ENCODE measurements at regions of chr19 and their contacts with region 1.

Region 1: DNA sequence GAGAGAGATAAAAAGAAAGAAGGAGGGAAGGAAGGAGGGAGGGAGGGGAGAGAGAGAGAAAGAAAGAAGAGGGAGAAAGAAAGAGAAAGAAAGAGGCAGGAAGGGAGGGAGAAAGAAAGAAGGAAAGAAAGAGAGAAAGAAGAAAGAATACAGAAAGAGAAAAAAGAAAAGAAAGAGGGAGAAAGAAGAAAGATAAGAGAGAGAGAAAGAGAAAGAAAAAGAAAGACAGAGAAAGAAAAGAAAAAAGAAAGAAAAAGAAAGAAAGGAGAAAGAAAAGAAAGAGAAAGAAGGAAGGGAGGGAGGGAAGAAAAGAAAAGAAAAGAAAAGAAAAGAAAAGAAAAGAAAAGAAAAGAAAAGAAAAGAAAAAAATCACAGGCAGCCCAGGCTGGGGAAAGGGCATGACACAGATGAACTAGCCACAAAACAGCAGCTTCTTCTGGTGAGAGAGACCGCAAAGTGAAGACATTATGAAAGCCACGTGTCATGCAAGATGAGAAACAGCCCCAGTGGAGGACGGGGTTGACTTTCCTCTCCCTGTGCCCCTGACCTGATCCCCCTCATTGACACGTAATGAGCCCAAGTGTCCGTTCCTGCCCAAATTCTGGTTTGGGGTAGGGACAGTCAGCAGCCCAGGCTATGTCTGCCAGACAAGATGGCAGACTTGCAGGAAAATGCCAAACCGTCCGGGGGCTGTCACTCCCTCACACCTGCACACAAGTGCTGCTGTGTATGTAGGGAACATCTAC is 102.1 kb downstream of the INSR start:
- DNase-seq: no peak
- ATAC-seq: no peak
- H3K4me3 ChIP-seq: no peak overlapping the region
- H3K27ac ChIP-seq: no peak overlapping the region
- H3K4me1 ChIP-seq: no peaks in the 10 kb centered on the region
- H3K27me3 ChIP-seq: no peaks in the 10 kb centered on the region
- CTCF ChIP-seq: no peak

Region 2: GRCh38 chr19:7159105-7159933 is 32.8 kb before region 1 on chr19:
- CTCF ChIA-PET with region 1: no interaction called
- POLR2A ChIA-PET with region 1: no interaction called
- in situ Hi-C with region 1: no loop called
- intact Hi-C with region 1: no loop called
- DNase-seq: peak; percentile 60
- ATAC-seq: no peak
- H3K4me3 ChIP-seq: no peak overlapping the region
- H3K27ac ChIP-seq: no peak overlapping the region
- H3K4me1 ChIP-seq: no peaks in the 10 kb centered on the region
- H3K27me3 ChIP-seq: no peaks in the 10 kb centered on the region
- CTCF ChIP-seq: no peak

Region 3: DNA sequence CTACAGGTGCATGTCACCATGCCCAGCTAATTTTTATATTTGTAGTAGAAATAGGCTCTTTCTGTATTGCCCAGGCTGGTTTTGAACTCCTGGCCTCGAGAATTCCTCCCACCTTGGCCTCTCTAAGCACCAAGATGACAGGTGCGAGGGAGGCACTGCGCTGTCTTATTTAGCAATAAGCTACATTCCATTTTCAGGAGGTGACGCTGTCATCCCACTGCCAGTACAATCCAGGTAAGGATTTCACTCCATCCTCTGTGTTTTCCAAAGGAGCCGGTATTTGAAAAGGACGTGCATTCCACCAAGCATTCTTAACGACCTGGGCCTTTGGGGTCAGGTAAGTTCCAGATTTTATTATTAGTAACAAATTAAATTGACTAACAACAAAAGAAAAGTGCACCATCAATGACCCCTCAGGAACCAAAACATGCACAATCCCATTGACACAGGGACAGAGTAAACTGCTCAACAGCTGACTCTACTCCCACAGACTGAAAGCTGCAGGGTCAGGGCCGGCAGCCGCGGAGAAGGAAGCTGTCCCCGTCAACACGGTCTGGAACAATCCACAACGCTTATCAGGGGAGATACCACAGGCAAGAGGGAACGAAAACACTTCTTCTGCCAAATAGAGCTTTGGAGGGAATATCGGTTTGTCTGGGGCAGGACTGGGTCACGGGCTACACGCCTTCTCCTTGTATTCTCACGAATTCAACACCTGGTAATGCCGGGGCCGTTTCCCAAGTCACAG is 19.3 kb after region 1 on chr19:
- CTCF ChIA-PET with region 1: no interaction called
- POLR2A ChIA-PET with region 1: interaction called, 10 read pairs
- in situ Hi-C with region 1: no loop called
- intact Hi-C with region 1: no loop called
- DNase-seq: no peak
- ATAC-seq: no peak
- H3K4me3 ChIP-seq: no peak overlapping the region
- H3K27ac ChIP-seq: no peak overlapping the region
- H3K4me1 ChIP-seq: no peaks in the 10 kb centered on the region
- H3K27me3 ChIP-seq: no peaks in the 10 kb centered on the region
- CTCF ChIP-seq: no peak

Measured in Panc1 (cell line).